Activated CD4-positive, alpha-beta memory T cell treated with anti-CD3 and anti-CD28 coated beads for 36 hours (primary cell): ENCODE measurements at regions of chr2 and their contacts with region 1.

Region 1: DNA sequence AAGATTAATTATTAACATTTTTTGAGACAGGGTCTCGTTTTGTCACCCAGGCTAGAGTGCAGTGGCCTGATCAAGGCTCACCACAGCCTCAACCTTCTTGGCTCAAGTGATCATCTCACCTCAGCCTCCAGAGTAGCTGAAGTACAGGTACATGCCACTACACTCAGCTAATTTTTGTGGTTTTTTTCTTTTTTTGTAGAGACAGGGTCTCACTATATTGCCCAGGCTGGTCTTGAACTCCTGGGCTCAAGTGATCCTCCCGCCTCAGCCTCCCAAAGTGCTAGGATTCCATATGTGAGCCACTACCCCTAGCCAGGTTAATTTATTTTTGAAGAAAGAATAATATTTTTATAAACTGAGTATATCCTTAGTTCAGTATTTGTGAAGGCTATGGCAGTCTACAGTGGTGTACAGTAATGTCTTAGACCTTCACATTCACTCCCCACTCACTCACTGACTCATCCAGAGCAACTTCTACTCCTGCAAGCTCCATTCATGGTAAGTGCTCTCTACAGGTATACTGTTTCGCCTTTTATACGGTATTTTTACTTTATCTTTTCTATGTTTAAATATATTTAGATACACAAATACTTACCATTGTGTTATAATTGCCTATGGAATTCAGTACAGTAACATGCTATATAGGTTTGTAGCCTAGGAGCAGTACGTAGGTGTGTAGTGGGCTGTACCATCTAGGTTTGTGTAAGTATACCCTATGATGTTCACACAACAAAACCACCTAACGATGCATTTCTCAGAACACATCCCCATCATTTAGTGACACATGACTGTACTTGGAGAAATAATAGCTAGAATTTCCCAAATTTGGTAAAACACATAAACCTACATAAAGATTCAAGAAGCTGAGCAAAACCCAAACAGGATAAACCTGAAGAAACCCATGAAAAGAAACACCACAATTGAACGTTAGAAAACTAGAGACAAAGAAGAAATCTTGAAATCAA is 38.6 kb downstream of the MGAT4A start:
- DNase-seq: no peak
- H3K4me3 Mint-ChIP-seq: peak overlapping the region; percentile 51
- H3K27ac Mint-ChIP-seq: peak overlapping the region; percentile 92
- H3K4me1 Mint-ChIP-seq: peaks cover 80% of the 10 kb centered on the region
- H3K27me3 Mint-ChIP-seq: no peaks in the 10 kb centered on the region

Region 2: GRCh38 chr2:98487806-98488651 is 204.3 kb before region 1 on chr2:
- CTCF ChIA-PET with region 1: no interaction called
- POLR2A ChIA-PET with region 1: no interaction called
- intact Hi-C with region 1: no loop called
- DNase-seq: peak; percentile 62
- H3K4me3 Mint-ChIP-seq: no peak overlapping the region
- H3K27ac Mint-ChIP-seq: no peak overlapping the region
- H3K4me1 Mint-ChIP-seq: peaks cover 87% of the 10 kb centered on the region
- H3K27me3 Mint-ChIP-seq: no peaks in the 10 kb centered on the region

Region 3: DNA sequence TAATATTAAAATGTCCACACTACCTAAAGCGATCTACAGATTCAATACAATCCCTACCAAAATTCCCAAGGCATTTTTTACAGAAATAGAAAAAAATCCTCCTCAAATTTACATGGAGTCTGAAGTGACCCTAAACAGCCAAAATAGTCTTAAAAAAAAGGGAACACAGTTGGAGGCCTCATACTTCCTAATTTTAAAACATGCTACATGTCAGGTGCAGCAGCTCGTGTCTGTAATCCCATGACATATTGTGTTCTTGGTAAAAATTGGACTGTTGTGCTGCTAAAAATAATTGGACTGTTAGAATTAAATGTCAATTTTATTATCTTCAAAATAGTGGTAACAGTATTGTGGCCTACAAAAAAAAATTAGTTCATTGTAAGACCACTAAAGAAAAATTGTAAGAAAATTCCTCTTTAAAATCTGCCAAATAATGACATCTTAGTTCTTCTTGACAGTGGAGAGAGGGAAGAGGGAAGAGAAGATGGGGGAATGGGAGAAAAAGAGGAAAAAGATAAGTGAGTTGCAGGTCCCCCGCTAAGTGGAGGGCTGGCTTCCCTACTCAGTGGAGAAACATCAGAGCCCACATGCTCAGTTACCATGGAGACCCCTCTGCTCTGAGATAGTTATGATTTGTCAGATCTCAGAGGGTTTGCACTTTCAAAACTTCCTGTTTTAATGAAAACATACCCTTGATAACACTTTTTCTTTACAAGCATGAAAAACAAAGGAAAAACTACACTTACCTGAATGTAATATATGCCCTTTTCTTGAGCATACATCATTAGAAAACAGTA is 37.5 kb before region 1 on chr2:
- CTCF ChIA-PET with region 1: interaction called, 6 read pairs
- POLR2A ChIA-PET with region 1: interaction called, 4 read pairs
- intact Hi-C with region 1: loop called (anchors 2 kb)
- DNase-seq: no peak
- H3K4me3 Mint-ChIP-seq: no peak overlapping the region
- H3K27ac Mint-ChIP-seq: peak overlapping the region; percentile 67
- H3K4me1 Mint-ChIP-seq: peaks cover 76% of the 10 kb centered on the region
- H3K27me3 Mint-ChIP-seq: no peaks in the 10 kb centered on the region

Region 4: DNA sequence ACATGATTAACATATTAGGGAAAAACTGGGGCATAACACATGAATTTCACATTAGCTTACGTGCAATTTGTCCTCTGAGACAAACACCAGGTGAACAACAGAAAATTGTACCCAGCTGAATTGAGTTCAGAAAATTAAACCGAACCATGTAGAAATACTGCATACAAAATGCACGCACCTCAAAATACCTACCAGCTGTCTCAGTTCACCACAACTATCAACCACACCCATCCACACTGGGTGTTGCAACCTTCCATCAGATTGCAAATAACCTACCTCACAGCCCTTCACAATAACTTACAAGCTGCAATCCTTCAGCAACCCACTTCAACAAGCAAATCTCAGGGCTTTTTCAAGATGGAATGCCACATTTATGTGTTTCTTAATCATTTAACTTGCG is 28.0 kb before region 1 on chr2:
- CTCF ChIA-PET with region 1: interaction called, 5 read pairs
- POLR2A ChIA-PET with region 1: interaction called, 5 read pairs
- intact Hi-C with region 1: loop called (anchors 1 kb)
- DNase-seq: peak; percentile 74
- H3K4me3 Mint-ChIP-seq: peak overlapping the region; percentile 60
- H3K27ac Mint-ChIP-seq: peak overlapping the region; percentile 99
- H3K4me1 Mint-ChIP-seq: peaks cover 67% of the 10 kb centered on the region
- H3K27me3 Mint-ChIP-seq: no peaks in the 10 kb centered on the region

Region 5: GRCh38 chr2:98713332-98714015 is 21.1 kb after region 1 on chr2:
- CTCF ChIA-PET with region 1: no interaction called
- POLR2A ChIA-PET with region 1: interaction called, 3 read pairs
- intact Hi-C with region 1: loop called (anchors 2 kb)
- DNase-seq: no peak
- H3K4me3 Mint-ChIP-seq: no peak overlapping the region
- H3K27ac Mint-ChIP-seq: peak overlapping the region; percentile 24
- H3K4me1 Mint-ChIP-seq: peaks cover 88% of the 10 kb centered on the region
- H3K27me3 Mint-ChIP-seq: no peaks in the 10 kb centered on the region